ENCODE measurements at regions of chr12 and their contacts with region 1.

Region 1: GRCh38 chr12:66301944-66302826 is at the start of gene HELB:
- DNase-seq: peak; percentile 96
- H3K4me3 ChIP-seq: peak within 1 kb of the TSS; percentile 73
- H3K27ac ChIP-seq: peak within 1 kb of the TSS; percentile 16
- H3K4me1 ChIP-seq: peaks cover 31% of the 10 kb centered on the region
- CTCF ChIP-seq: no peak
- total RNA-seq, gene HELB: 3.8 and 6.0 TPM in 2 replicates

Region 2: DNA sequence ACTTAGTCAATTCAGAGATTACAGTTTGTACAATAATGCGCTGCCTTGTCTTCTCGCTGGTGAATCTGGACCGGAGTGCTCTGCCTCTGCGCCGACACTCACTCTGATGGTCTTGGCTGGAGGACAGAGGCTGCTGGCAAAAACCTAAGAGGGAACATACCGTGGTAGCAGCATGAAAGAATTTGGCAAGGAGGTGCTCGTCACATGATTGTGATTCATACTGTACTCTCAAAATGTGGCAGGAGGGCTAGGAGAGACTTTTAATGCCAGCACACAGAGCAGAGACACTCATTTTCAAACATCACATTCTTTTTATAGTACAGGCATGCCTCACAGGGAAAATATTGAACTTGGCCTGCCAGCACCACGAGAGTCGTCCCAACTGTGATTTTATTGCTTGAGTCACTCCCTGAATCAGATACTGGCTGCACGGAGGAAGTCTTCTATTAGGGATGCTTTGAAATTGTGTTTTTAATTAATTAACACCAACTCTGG is 410.2 kb before region 1 on chr12:
- CTCF ChIA-PET with region 1: no interaction called
- POLR2A ChIA-PET with region 1: no interaction called
- intact Hi-C with region 1: no loop called
- DNase-seq: no peak
- H3K4me3 ChIP-seq: no peak overlapping the region
- H3K27ac ChIP-seq: no peak overlapping the region
- H3K4me1 ChIP-seq: no peaks in the 10 kb centered on the region
- CTCF ChIP-seq: no peak

Region 3: DNA sequence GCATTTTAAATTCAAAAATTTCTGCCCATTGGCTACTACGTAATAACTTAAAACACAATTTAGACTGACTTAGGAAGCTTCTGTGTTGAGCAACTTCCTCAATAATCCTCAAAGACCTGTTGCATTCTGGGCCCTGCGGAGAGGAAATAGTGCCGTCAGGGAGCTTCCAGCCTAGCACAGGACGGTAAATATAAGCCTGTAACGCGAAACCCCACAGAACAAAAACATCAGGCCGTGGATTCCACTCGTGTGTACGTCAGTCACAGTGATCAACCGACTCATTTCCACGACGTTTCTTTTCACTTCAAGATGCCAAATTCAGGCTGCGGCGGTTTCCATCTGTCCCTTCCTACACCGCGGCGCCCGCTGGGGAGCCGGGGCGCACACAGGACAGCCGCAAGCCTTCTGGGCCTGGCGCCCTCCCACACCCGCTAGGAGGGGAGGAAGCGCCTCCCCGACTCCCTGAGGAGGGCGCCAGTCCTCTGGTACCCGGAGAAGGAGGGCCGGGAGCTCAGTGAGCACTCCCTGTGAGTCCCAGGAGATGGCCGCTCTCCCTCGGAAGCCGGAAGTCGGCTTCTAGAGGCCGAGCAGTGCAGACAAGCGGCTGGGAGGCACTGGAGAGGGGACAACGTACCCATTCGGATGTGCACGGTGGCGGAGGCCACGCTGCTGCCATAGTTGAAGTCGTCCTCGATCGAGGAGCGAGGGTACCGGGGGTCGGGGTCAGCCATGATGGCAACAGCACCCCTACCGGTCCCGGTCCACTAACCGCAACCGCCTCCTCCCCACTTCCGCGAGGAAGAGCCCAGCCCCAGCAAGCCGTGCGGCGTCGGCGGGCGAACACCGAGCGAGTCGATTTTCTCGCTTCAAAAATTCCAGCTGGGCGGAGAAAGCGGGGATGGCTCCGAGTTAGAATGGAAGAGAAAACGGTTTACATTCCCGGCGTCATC is 132.7 kb before region 1 on chr12 and contains the start of gene TMBIM4:
- CTCF ChIA-PET with region 1: no interaction called
- POLR2A ChIA-PET with region 1: interaction called, 3 read pairs
- intact Hi-C with region 1: loop called (anchors 2 kb)
- DNase-seq: peak; percentile 91
- H3K4me3 ChIP-seq: peak within 1 kb of the TSS; percentile 80
- H3K27ac ChIP-seq: peak within 1 kb of the TSS; percentile 93
- H3K4me1 ChIP-seq: peaks cover 23% of the 10 kb centered on the region
- CTCF ChIP-seq: peak; percentile 73
- total RNA-seq, gene TMBIM4: 16.0 and 19.2 TPM in 2 replicates

Region 4: GRCh38 chr12:66235626-66236281 is 66.4 kb before region 1 on chr12:
- CTCF ChIA-PET with region 1: no interaction called
- POLR2A ChIA-PET with region 1: interaction called, 4 read pairs
- intact Hi-C with region 1: loop called (anchors 5 kb)
- DNase-seq: peak; percentile 38
- H3K4me3 ChIP-seq: peak overlapping the region; percentile 70
- H3K27ac ChIP-seq: peak overlapping the region; percentile 14
- H3K4me1 ChIP-seq: peaks cover 35% of the 10 kb centered on the region
- CTCF ChIP-seq: peak; percentile 37

Region 5: GRCh38 chr12:66361703-66362102 is 59.5 kb after region 1 on chr12:
- CTCF ChIA-PET with region 1: no interaction called
- POLR2A ChIA-PET with region 1: no interaction called
- intact Hi-C with region 1: no loop called
- DNase-seq: no peak
- H3K4me3 ChIP-seq: no peak overlapping the region
- H3K27ac ChIP-seq: no peak overlapping the region
- H3K4me1 ChIP-seq: no peaks in the 10 kb centered on the region
- CTCF ChIP-seq: no peak

Region 6: DNA sequence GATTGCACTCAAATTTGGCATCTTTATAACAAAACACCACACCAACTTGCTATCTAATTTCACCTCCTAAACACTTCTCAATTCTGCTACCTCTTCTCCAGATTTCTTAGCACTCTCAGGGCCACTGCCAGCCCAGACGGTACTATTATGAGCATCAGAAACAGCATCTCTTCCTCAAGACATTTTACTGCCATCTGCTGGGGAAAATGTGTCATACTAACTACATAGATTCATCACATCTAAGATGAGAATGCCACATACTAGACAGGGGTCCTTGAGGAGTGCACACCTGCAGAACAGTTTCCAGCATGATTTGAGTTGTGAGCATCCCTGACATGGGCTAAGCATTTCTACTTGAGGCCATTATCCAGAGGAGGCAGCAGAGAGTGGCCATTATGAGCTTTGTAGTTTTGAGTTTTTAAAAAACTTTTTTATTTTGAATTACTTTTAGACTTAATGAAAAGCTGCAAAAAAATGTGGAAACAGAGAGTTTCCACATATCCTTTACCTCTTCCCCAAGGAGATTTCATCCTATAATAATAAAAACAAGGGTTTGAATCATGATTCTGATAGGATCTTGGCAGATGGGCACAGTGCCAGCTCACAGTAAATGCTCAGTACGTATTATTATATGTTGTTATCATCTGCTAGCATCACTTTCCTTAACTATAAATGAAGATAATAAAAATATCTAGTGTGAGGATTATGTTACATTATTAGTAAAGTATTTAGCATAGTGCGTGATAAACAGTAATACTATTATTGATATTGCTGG is 391.9 kb after region 1 on chr12:
- CTCF ChIA-PET with region 1: no interaction called
- POLR2A ChIA-PET with region 1: interaction called, 14 read pairs
- intact Hi-C with region 1: no loop called
- DNase-seq: peak; percentile 94
- H3K4me3 ChIP-seq: no peak overlapping the region
- H3K27ac ChIP-seq: peak overlapping the region; percentile 44
- H3K4me1 ChIP-seq: peaks cover 52% of the 10 kb centered on the region
- CTCF ChIP-seq: peak; percentile 90